ENCODE measurements at regions of chr1 and their contacts with region 1.

Region 1: DNA sequence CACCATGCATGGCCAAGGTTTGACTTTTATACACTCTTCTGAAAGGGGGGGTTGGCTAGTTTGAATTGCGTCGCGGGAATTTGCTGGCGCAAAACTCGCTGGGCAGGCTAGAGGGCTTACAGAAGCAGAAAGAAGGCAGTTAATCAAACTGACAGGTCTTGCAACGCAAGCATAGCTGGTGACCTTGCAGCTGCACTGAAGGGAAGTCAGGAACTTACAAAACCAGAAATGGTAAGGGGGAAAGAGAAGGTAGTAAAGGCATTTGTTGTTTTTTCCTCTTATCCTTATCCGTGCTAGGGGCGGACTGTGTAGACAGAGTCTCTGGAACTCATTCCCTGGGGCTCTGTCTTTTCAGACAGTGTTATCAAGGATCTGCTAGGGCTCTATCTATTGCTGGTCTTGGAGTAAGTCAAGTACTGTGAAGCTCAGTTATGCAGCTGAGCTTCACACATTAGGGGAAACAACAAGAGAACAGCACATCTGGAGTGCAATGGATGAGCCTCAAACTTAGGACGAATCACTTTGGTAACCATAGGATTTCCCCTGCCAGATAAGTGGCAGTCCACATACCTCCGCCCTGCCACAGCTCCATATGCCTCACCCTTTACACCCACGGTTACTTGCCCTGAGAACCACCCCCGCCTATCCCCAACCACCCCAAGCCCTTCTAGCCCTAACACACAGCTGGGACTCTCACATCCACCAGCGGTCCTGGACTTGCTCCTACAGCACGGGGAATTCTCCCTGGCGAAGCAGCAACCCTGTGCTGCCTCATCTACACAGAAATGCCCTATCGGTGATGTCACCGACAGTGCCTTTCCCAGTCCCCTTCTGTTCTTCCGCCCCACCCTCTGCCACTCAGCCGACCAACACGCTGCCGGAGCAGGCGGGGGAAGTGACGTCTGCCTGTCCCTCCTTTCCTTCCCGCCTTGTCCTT is 251.4 kb downstream of the FAM72C start:
- DNase-seq: peak; percentile 55
- ATAC-seq: peak; percentile 79
- H3K4me3 Mint-ChIP-seq: peak overlapping the region; percentile 23
- H3K27ac Mint-ChIP-seq: peak overlapping the region; percentile 62
- H3K4me1 Mint-ChIP-seq: peaks cover 7% of the 10 kb centered on the region
- H3K27me3 Mint-ChIP-seq: peaks cover 47% of the 10 kb centered on the region

Region 2: GRCh38 chr1:143661418-143662101 is 58.8 kb before region 1 on chr1:
- CTCF ChIA-PET with region 1: no interaction called
- POLR2A ChIA-PET with region 1: no interaction called
- intact Hi-C with region 1: loop called in 1 of 2 experiments (anchors 10 kb)
- DNase-seq: peak; percentile 23
- ATAC-seq: no peak
- H3K4me3 Mint-ChIP-seq: peak overlapping the region; percentile 32
- H3K27ac Mint-ChIP-seq: no peak overlapping the region
- H3K4me1 Mint-ChIP-seq: peaks cover 13% of the 10 kb centered on the region
- H3K27me3 Mint-ChIP-seq: peaks cover 80% of the 10 kb centered on the region

Measured in activated CD4-positive, alpha-beta T cell treated with anti-CD3 and anti-CD28 coated beads for 36 hours (primary cell).